A673 (cell line): ENCODE measurements at regions of chr7 and their contacts with region 1.

Region 1: DNA sequence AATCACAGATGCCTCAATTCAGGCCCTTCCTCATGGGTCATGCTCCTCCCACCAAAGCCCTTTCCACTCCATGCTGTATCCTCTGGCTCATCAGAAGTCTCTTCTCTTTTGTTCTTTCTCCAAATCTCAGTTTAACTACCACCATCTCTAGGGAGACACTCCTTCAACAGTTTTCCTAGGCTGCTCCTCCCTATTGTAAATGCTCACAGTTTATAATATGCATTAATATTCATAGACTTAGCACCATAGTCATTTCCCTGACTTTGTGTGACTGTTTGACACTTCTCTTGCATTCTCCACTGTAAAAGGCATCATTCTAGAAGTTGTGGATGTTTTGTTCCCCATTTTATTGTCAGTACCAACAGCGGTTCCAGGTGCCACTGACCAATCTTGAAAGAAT is 226.5 kb upstream of the PRSS1 start:
- DNase-seq: no peak
- H3K4me3 ChIP-seq: no peak overlapping the region
- H3K27ac ChIP-seq: no peak overlapping the region
- H3K4me1 ChIP-seq: no peaks in the 10 kb centered on the region
- H3K27me3 ChIP-seq: peaks cover 25% of the 10 kb centered on the region
- CTCF ChIP-seq: no peak

Region 2: GRCh38 chr7:142420559-142421362 is 102.0 kb before region 1 on chr7:
- CTCF ChIA-PET with region 1: no interaction called
- POLR2A ChIA-PET with region 1: no interaction called
- intact Hi-C with region 1: no loop called
- DNase-seq: peak; percentile 24
- H3K4me3 ChIP-seq: no peak overlapping the region
- H3K27ac ChIP-seq: no peak overlapping the region
- H3K4me1 ChIP-seq: no peaks in the 10 kb centered on the region
- H3K27me3 ChIP-seq: no peaks in the 10 kb centered on the region
- CTCF ChIP-seq: peak; percentile 46; the same call in 1 of the 2 replicates

Region 3: GRCh38 chr7:142500364-142500763 is 22.4 kb before region 1 on chr7:
- CTCF ChIA-PET with region 1: no interaction called
- POLR2A ChIA-PET with region 1: no interaction called
- intact Hi-C with region 1: loop called (anchors 1 kb)
- DNase-seq: no peak
- H3K4me3 ChIP-seq: no peak overlapping the region
- H3K27ac ChIP-seq: no peak overlapping the region
- H3K4me1 ChIP-seq: no peaks in the 10 kb centered on the region
- H3K27me3 ChIP-seq: peaks cover 23% of the 10 kb centered on the region
- CTCF ChIP-seq: no peak

Region 4: DNA sequence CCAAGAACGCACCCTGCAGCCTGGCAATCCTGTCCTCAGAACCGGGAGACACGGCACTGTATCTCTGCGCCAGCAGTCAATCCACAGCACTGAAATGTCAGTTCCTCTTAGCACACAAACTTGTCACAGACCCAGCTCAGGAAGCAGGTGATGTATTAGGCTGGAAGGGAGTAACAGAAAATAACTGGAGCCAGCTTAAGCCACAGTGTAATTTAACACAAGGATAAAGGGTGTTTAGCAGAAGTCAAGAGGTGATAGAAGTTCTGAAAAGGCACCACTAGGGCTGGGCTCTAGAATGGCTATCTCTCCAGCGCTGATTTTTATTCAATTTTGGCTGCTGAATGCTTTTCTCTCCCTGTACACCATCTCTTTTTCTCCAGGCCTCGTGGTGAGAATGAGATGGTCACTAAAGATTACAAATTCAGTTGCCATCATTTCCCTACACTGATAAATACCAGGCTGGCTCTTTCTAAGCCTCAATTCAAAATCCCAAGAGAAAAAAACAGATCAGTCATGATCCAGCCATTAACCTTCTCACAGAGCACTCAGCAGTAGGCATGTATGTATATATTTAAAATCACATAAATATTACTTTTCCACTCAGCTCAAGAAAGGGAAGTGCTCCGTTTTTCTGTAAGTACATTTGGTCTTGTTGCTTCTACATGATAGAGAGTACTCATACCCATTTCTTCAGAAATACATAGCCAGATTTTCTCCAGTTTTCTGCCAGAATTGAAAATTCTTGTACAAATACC is 123.8 kb after region 1 on chr7:
- CTCF ChIA-PET with region 1: no interaction called
- POLR2A ChIA-PET with region 1: no interaction called
- intact Hi-C with region 1: no loop called
- DNase-seq: no peak
- H3K4me3 ChIP-seq: no peak overlapping the region
- H3K27ac ChIP-seq: no peak overlapping the region
- H3K4me1 ChIP-seq: no peaks in the 10 kb centered on the region
- H3K27me3 ChIP-seq: peaks cover 43% of the 10 kb centered on the region
- CTCF ChIP-seq: no peak